Esophagus muscularis mucosa (tissue), 4 donors: ENCODE measurements at regions of chr12 and their contacts with region 1.

Region 1: DNA sequence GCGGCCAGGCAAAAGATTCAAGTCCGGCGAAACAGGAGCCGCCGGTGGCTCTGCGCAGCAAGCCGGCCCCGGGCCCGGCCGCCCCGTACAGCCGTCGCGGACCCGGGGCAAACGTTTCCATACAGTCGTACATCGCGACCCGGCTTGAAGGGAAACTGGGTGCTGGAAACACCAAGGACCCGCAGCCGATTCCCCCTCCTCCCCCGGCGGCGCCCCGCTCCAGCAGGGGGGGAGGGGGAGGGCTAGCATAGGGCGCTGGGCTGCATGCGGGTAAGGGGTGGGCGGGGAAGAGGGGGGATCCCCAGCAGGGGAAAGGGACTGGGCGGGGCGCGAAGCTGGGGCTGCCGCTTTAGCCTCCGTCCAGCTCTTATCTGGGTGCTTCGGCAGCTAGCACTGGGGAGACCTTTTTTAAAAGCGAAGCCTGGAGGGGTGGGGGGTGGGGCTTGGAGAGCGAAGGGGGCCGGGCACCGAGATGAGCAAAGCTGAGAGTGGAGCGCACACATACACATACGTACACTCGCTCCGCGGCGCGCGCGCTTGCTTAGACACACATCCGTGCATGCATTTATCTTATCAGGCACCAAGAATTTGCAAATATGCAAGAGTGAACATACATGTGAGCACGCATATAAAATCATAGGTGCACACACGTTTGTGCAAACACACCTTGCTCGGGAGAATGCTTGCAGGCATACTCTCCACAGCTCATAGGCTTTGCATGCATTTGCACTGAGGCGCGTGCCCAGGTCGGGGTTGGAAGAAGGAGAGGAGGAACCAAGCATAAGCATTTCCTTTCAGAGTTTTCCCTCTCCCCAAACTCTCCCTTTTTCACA is 11.8 kb downstream of the RARG start:
- DNase-seq: no peak
- H3K4me3 ChIP-seq: peak overlapping the region; percentile 71 to 84 (median 77)
- H3K27ac ChIP-seq: peak overlapping the region; percentile 96 to 99 (median 98)
- H3K4me1 ChIP-seq: peaks cover 73 to 98% (median 95%) of the 10 kb centered on the region in 4 donors
- H3K27me3 ChIP-seq: no peaks in the 10 kb centered on the region
- CTCF ChIP-seq: no peak
- EP300 ChIP-seq: no peak
- POLR2A ChIP-seq: no peak

Region 2: DNA sequence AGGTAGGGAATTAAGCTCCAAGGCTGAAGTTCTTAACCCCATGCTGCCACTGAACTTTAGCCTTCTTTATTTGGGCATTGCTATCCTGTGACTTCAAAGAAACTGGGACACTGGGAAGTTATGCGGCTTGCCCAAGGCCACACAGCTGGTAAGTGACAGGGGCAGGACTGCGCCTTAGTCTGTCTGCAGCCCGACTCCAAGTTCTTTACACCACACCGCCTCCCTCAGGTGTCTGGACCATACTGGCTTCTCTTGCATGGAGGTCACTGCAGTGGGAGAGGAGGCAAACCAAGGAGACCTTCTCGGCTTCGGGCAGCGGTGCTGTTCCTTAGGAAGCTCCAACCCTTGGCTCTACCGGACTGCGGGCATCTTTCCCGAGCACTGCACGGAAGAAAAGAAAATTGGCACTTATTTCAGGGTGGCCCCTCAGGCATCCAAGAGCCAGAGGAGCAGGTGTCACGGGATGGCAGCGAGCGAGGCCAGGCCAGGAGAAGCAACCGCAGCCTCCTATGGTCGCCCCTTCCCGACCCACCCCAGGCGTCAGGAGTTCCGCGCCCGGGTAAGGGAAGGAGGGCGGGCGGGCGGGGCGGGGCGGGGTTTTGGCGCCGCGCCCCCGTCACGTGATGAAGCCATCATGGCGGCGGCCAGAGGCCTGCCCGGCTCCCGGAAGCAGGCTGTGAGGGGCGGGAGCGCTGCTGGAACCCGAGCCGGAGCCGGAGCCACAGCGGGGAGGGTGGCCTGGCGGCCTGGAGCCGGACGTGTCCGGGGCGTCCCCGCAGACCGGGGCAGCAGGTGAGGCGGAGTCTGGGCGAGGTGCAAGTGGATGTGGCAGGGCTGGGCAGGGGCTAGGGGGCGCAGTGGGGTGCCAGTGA is 31.5 kb after region 1 on chr12:
- intact Hi-C with region 1: loop called (anchors 2 kb)
- DNase-seq: peak; percentile 96
- H3K4me3 ChIP-seq: peak overlapping the region; percentile 74 to 95 (median 86)
- H3K27ac ChIP-seq: peak overlapping the region; percentile 88 to 93 (median 91)
- H3K4me1 ChIP-seq: peaks cover 24 to 45% (median 36%) of the 10 kb centered on the region in 4 donors
- H3K27me3 ChIP-seq: no peaks in the 10 kb centered on the region
- CTCF ChIP-seq: peak; percentile 43 to 55 (median 43)
- EP300 ChIP-seq: no peak
- POLR2A ChIP-seq: no peak